ENCODE measurements at regions of chr5 and their contacts with region 1.

Region 1: DNA sequence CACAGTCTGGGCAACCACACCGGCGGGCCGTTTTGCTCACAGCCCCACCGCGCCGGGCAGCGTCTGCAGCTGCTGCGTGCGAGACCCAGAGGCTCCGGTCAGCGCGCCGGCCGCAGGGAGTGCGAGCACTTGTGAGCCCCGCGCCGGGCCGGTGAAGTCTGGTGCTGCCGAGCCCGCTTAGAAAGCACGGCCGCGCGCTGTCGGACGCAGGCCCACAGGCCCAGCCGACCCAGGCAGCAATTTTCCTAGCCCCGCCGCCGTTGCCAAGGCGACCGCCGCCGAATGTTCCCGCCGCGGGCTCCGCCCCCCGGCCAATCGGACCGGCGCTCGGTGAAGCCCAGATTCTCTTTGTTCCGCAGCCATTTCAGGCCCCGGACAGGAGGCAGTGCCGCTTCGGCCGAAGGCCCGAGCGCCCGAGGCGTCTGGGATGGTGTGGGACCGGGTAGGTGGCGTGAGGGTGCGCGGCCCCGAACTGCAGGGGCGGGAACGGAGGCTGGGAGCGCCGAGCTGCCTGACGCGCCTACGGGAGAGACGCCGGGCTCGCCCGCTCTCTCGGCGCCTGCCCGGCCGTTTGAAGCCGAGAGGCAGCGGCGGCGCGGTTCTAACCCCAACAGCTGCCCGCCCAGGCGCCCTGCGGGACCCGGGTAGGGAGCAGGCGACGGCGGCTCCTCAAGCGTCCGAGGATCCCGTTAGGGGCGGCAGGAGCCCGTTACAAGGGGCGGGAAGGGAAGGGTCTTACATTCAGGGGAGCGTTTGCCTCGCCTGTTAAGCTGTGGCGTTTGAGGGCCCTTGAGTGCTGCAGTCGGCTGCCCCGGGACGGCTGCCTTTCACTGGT is at the start of gene TNPO1:
- DNase-seq: peak; percentile 85
- ATAC-seq: peak; percentile 87
- H3K4me3 ChIP-seq: peak within 1 kb of the TSS; percentile 86
- H3K27ac ChIP-seq: peak within 1 kb of the TSS; percentile 85
- H3K4me1 ChIP-seq: peaks cover 23% of the 10 kb centered on the region
- H3K27me3 ChIP-seq: no peaks in the 10 kb centered on the region
- CTCF ChIP-seq: no peak
- total RNA-seq, gene TNPO1: 187 and 197 TPM in 2 replicates

Region 2: DNA sequence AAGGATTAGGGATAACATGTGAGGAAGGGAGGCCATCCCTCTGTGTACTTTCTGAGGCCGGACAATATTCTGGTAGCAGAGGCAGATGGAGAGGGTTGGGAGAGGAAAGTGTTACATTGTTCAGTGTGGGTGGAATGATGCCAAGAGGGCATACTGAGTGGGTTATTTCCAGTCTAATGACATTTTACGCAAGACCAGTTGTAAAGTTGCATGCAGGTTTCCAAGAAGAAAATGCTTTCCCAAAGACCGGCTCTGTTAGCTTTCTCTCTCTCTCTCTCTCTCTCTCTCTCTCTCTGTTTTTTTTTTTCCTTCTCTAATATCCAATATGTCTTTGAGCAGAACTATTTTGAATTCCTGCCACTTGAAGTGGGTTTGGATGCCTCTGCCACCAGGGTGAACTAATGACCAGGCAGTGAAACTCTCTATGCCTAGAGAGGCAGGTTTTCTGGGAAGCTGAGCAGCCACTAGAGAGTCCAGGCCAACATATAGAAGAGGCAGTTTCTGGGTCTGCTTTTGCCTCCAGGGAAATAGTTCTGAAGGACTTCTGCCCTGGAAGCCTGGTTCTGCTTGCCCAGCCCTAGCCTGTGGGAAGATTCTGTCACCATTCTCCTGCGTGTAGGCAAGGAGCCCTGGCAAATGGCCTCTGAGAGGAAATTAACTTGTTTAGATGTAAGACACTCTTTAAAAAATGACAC is 284.9 kb before region 1 on chr5:
- CTCF ChIA-PET with region 1: no interaction called
- POLR2A ChIA-PET with region 1: no interaction called
- intact Hi-C with region 1: loop called (anchors 5 kb)
- DNase-seq: peak; percentile 4
- ATAC-seq: no peak
- H3K4me3 ChIP-seq: no peak overlapping the region
- H3K27ac ChIP-seq: no peak overlapping the region
- H3K4me1 ChIP-seq: no peaks in the 10 kb centered on the region
- H3K27me3 ChIP-seq: no peaks in the 10 kb centered on the region
- CTCF ChIP-seq: no peak

Region 3: DNA sequence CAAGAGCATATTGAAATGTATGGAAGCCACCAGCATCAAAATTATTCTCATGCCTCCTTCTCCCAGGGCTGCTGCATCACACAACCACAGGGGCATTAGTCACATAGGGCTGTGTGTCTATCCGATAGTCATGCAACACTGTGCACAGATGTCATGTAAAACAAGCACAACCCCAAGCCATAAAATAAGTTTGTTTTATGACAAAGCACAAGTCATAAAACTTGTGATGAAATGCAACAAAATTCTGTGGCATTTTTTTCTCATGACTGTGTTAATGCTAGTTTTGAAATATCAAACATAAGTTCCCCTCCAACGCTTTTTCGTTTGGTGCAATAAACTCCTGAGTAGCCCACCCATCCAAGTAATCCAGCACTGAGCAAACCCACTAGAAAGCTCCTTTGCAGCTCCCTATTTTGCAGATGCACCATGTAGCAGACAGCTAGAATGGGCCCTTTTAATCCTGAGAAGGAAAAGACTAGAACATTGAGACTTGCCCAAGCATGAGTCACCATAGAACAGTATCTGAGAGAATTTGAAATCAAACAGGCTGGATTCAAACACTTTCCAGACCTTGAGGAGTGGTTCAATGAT is 216.0 kb before region 1 on chr5:
- CTCF ChIA-PET with region 1: no interaction called
- POLR2A ChIA-PET with region 1: interaction called, 4 read pairs
- intact Hi-C with region 1: loop called (anchors 1 kb)
- DNase-seq: peak; percentile 96
- ATAC-seq: peak; percentile 89
- H3K4me3 ChIP-seq: peak overlapping the region; percentile 58
- H3K27ac ChIP-seq: peak overlapping the region; percentile 100
- H3K4me1 ChIP-seq: peaks cover 71% of the 10 kb centered on the region
- H3K27me3 ChIP-seq: no peaks in the 10 kb centered on the region
- CTCF ChIP-seq: no peak

Region 4: DNA sequence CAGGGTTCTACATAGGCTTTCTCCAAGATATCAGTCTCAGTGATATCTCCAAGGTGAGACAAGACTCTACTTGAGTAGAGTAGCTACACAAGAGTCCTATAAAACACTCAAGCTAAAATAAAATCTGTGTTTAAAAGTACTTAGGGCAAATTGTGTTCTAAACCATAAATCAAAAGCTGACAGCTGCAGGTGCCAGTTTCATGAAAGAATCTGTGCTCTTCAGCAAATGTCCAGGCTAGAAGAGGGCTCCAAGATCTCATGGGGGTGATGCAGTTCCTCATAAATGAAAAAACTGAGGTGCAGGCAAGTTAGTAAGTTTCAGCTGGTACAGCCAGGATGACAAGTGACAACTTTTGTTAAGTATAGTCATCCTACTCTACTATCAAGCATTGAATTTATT is 142.9 kb before region 1 on chr5:
- CTCF ChIA-PET with region 1: no interaction called
- POLR2A ChIA-PET with region 1: no interaction called
- intact Hi-C with region 1: loop called (anchors 10 kb)
- DNase-seq: peak; percentile 4
- ATAC-seq: no peak
- H3K4me3 ChIP-seq: no peak overlapping the region
- H3K27ac ChIP-seq: 0 out of 2 replicates have a peak overlapping the region, but pooled peaks have one; percentile 16
- H3K4me1 ChIP-seq: peaks cover 11% of the 10 kb centered on the region; the same call in 1 of the 2 replicates
- H3K27me3 ChIP-seq: no peaks in the 10 kb centered on the region
- CTCF ChIP-seq: no peak

Region 5: DNA sequence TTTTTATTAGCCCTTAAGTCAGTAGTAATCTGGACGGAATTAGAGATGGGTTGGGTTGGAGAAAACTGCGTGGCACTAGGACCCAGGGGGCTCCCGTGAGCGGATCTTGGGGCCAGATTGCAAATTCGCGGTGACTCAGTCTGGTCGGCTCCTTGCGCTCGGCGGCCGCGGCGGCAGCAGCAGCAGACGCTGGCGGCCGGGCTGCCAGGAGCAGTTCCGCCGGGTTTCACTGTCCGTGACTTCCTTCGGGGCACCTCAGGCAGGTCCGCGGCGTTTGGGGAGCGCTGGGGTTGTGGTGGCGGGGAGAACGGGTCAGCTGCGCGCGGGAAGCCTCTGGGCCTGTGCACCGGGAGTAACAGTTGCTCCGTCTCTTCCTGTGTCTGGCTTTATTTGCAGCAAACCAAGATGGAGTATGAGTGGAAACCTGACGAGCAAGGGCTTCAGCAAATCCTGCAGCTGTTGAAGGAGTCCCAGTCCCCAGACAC is 31.5 kb after region 1 on chr5:
- CTCF ChIA-PET with region 1: no interaction called
- POLR2A ChIA-PET with region 1: no interaction called
- intact Hi-C with region 1: loop called (anchors 1 kb)
- DNase-seq: peak; percentile 82
- ATAC-seq: peak; percentile 79
- H3K4me3 ChIP-seq: peak overlapping the region; percentile 95
- H3K27ac ChIP-seq: peak overlapping the region; percentile 75
- H3K4me1 ChIP-seq: peaks cover 26% of the 10 kb centered on the region
- H3K27me3 ChIP-seq: no peaks in the 10 kb centered on the region
- CTCF ChIP-seq: no peak

Region 6: DNA sequence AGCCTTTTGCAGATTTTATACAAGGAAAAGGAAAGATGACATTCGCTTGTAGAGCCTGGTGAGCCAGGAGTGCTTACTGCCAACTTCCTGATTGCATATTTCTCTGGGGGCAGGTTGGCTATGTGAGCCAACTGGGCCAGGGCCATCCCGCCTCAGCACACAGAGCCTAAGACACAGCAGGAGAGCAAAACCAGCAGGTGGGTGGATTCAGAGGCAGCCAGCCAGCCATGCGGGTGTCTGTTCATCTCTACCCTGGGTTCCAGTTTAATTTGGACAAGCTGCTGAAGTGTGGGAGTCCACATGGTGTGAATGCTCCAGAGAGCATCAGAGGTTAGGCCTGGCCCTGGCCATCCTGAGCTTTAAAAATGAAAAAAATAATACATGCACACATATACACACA is 1100.9 kb after region 1 on chr5:
- CTCF ChIA-PET with region 1: no interaction called
- POLR2A ChIA-PET with region 1: no interaction called
- intact Hi-C with region 1: no loop called
- DNase-seq: no peak
- ATAC-seq: no peak
- H3K4me3 ChIP-seq: no peak overlapping the region
- H3K27ac ChIP-seq: no peak overlapping the region
- H3K4me1 ChIP-seq: no peaks in the 10 kb centered on the region
- H3K27me3 ChIP-seq: no peaks in the 10 kb centered on the region
- CTCF ChIP-seq: no peak